ENCODE measurements at regions of chr3 and their contacts with region 1.

Region 1: DNA sequence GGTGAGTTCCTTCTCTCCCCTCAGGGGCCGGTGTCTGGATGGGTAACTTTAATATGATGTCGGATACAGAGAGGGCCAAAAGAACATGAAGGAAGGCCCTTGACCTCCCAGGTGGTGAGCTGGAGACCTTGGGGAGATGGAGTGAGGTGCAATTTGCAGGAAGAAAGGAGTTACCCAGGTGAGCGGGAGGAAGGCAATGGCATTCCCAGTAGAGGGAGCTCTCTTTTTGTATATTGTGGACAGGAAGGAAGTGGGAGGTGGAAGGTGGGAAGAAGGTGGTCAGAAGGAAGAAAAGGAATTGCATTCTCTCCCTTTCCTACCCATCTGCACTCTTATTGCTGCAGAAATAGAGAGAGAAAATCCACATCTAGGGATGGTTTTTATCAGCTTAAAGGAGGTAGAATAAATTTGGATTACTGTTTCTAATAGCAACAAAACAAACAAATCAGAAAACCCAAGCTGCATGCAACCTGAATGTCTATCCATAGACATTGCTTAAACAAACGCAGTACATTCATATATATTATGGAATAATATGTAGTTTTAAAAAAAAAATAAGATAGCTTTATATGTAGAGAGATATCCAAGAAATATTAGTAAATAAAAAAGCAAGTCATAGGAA is 169.0 kb upstream of the TSC22D2 start:
- H3K4me3 ChIP-seq: no peak overlapping the region
- H3K27ac ChIP-seq: no peak overlapping the region
- H3K4me1 ChIP-seq: no peaks in the 10 kb centered on the region
- CTCF ChIP-seq: peak; percentile 27; the same call in 1 of the 2 replicates

Region 2: DNA sequence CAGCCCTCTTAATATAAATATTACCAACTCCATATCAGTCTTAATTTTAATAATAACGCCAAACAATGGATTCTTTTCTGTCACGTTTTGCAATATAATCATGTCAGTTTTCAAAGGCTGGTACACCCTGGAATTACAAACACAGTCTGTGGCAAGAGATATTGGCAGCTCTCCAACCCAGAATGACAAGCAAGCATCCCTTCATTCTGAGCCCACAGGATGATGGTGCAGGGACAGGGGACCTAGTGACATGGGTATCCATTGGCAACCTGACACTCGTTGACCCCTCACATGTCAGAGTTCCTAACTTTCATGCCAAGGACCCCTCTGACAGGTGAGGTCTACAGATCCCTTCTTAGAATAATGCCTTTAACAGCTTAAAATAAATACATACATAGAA is 14.5 kb after region 1 on chr3:
- CTCF ChIA-PET with region 1: interaction called, 11 read pairs
- POLR2A ChIA-PET with region 1: interaction called, 3 read pairs
- H3K4me3 ChIP-seq: no peak overlapping the region
- H3K27ac ChIP-seq: no peak overlapping the region
- H3K4me1 ChIP-seq: peaks cover 3% of the 10 kb centered on the region
- CTCF ChIP-seq: no peak

Region 3: GRCh38 chr3:150296123-150296735 is 57.1 kb after region 1 on chr3:
- CTCF ChIA-PET with region 1: interaction called, 11 read pairs
- POLR2A ChIA-PET with region 1: no interaction called
- H3K4me3 ChIP-seq: no peak overlapping the region
- H3K27ac ChIP-seq: no peak overlapping the region
- H3K4me1 ChIP-seq: no peaks in the 10 kb centered on the region
- CTCF ChIP-seq: no peak

Region 4: DNA sequence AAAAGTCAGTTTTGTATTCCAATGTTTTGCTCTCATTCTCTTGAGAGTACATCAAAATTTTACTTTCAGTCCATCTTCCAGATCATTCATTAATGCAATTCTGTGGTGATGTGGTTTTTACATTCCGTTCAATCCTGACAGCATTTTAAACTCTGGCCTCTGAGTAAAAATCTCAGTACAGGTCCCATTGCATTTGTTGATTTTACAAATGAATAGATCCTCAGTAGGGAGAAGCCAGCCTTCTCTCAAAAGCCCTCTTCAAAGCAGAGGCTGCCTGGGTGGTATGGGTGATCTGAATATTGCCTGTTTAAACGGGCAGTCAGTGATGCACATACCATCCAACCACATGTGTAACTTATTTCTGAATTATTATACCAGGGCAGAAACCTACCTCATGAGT is 96.5 kb after region 1 on chr3:
- CTCF ChIA-PET with region 1: no interaction called
- POLR2A ChIA-PET with region 1: no interaction called
- H3K4me3 ChIP-seq: no peak overlapping the region
- H3K27ac ChIP-seq: no peak overlapping the region
- H3K4me1 ChIP-seq: no peaks in the 10 kb centered on the region
- CTCF ChIP-seq: no peak

Region 5: GRCh38 chr3:150408221-150409102 is 169.4 kb after region 1 on chr3 and contains the start of gene TSC22D2:
- CTCF ChIA-PET with region 1: interaction called, 13 read pairs
- POLR2A ChIA-PET with region 1: interaction called, 4 read pairs
- H3K4me3 ChIP-seq: peak within 1 kb of the TSS; percentile 87
- H3K27ac ChIP-seq: peak within 1 kb of the TSS; percentile 89
- H3K4me1 ChIP-seq: no peaks in the 10 kb centered on the region
- CTCF ChIP-seq: peak; percentile 62

Region 6: DNA sequence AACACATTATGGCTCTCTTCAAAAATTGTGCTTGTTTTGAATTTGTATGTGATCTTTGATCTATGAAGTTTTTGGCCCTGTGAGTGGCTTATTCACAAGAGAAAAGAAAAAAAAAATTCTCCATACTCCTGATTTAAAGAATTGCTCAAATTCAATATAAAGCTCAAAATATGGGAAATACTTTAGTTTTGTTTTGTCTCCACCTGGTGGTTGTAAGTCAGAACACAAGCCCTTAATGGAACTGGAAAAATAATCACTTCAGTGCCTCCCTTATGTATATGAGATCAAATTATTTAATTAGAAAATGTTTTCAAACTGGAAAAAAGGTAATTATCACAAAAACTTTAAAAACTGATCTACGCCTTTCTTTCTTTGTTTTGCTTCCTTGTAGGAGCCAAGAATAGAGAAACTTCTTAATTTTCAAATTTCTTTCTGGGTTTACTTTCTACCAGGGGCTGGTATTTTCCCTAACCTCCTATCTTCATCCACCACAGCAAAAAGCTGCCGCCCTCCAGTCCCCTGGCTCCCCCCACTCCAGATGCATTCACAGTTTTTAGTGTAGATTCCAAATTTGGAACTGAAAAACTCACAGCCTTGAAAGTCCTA is 256.6 kb after region 1 on chr3:
- CTCF ChIA-PET with region 1: interaction called, 34 read pairs
- POLR2A ChIA-PET with region 1: no interaction called
- H3K4me3 ChIP-seq: no peak overlapping the region
- H3K27ac ChIP-seq: no peak overlapping the region
- H3K4me1 ChIP-seq: no peaks in the 10 kb centered on the region
- CTCF ChIP-seq: no peak